Left cardiac atrium (tissue), 4 donors: ENCODE measurements at regions of chr18 and their contacts with region 1.

Region 1: GRCh38 chr18:50819728-50820378 is at the start of gene MRO:
- DNase-seq: peak; percentile 88
- ATAC-seq: peak; percentile 96
- total RNA-seq, gene MRO: 3.4 to 5.1 TPM

Region 2: DNA sequence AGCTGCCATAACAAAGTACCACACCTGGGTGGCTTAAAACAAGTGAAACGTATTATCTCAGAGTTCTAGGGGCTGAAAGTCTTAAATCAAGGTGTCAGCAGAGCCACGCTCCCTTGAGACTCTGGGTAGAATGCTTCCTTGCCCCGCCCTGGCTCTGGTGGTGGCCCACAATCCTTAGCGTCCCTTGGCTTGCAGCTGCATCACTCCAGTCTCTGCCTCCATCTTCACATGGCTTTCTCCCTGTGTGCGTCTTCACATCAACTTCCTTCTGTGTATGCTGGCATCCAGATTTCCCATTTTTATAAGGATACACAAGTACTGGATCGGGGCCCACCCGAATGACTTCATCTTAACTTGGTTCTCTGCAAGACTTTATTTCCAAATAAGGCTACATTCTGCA is 62.5 kb before region 1 on chr18:
- intact Hi-C with region 1: no loop called
- DNase-seq: no peak
- ATAC-seq: no peak

Region 3: DNA sequence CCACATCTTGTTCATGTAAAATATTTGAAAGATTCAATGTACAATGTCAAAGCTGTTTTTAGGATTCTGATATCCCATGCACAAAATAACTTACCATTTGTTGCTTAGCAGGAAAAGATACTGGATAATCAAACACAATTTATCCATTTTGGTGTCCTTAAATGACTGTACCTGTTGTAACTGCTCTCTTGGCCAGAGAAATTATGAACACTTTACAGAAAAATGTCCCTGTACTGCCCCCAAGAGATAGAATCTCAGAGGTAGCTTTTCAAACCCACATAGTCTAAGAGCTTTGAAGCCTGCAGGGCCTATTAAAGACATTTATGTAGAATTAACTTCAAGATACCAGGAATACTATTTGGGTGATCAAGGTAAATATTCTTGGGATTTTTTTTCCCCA is 46.9 kb after region 1 on chr18:
- intact Hi-C with region 1: loop called in 1 of 2 experiments (anchors 5 kb)
- DNase-seq: no peak
- ATAC-seq: peak in 1 of 2 donors; percentile 85

Region 4: GRCh38 chr18:51051105-51051712 is 231.4 kb after region 1 on chr18:
- intact Hi-C with region 1: loop called in 1 of 2 experiments (anchors 5 kb)
- DNase-seq: no peak
- ATAC-seq: peak; percentile 79 to 82